A673 (cell line): ENCODE measurements at regions of chr7 and their contacts with region 1.

Region 1: DNA sequence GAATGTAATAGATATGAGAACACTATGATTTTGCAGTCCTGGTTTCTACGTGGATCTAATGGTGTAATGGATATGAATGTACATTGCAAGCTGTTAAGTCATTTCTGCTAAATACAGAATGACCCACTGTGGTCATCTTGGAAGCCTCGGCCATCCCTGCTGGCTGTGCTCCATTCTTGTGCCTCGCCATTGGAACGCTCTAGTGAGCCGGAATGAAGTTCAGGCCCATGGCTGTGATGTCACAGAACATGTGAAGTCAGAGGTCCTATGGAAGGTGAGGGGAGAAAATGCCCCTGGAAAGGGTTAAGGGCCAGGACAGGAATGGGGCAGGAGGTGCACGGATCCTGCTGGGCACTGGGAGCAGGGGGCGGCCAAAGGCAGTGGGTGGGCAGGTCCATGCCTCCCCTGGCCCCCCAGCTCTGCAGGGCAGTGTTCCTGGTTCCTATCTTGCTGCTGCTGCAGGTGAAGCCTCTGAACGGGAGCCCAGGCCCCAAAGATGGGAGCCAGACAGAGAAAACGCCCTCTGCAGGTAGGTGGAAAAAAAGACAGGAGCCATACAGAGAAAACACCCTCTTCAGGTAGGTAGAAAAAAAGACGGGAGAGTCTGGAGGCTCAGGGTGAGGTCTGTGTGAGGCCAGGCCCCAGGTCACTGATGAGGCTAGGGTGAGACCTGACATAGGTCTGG is at the start of gene LLCFC1:
- DNase-seq: no peak
- H3K4me3 ChIP-seq: no peak within 1 kb of the TSS
- H3K27ac ChIP-seq: no peak within 1 kb of the TSS
- H3K4me1 ChIP-seq: no peaks in the 10 kb centered on the region
- H3K27me3 ChIP-seq: no peaks in the 10 kb centered on the region
- CTCF ChIP-seq: peak; percentile 43
- total RNA-seq, gene LLCFC1: not detected in 2 replicates

Region 2: DNA sequence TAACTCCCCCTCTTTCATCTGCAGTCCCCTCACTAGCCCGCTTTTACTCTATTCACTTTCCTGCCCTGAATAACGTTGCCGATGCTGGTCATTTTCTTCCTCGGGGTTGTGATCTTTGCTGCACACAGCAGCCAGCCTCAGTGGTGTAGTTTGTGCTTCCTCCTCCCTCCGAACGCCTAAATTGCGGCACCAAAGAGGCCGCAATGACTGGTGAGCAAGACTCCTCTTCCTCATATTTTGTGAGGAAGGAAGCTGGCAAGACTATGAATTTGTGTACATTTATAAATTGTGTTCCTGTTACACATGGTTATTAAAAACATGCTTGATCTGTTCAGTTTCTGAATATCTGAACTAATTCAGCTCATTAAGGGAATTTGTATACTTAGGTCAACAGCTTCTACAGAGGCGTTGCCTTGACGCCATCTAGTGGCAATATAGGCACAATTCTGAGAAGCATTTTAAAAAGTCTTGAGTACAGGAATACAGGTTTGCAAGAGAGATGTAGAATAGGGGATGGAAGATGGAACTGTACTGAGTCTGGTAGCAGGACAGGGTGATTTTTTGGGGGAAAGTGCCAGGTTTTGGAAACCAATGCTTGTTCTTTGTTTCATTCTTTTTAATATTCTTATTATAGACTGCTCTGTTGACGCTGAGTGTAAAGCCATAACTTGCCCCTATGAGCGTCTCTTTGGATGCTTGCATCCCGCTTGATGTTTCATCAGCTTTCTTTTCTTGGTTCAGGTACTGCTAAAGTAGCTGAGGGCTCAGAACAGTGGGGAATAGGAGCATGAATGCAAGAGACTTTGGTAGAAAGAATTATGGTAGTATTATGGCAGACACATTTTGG is 1153.4 kb before region 1 on chr7:
- CTCF ChIA-PET with region 1: no interaction called
- POLR2A ChIA-PET with region 1: no interaction called
- intact Hi-C with region 1: loop called (anchors 10 kb)
- DNase-seq: peak; percentile 63
- H3K4me3 ChIP-seq: no peak overlapping the region
- H3K27ac ChIP-seq: no peak overlapping the region
- H3K4me1 ChIP-seq: no peaks in the 10 kb centered on the region
- H3K27me3 ChIP-seq: no peaks in the 10 kb centered on the region
- CTCF ChIP-seq: peak; percentile 86

Region 3: DNA sequence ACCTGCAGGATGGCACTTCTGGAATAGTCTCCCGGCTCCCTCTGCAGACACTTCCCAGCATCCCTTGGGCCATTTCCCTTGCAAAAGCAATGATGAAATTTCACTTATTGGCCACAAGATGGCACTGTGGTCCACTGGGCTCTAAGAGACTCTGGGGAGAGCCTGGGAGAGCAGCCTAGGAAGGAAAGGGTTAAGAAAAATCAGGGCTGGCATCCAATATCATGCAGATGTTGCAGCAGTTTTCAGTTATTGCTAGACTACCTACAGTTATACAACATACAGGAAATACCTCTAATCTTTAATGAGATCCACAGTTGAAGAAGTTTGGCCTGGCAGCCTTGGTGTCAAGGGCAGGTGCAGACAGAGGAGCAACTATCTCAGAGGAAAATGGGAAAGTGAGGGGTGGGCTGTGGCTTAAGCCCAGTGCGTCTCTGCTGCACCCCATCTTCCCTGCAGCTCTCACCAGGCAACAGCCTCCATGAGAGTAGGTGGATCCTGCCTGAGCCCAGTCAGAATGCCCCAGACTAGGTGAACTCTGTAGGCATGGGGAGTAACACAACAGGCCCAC is 581.3 kb before region 1 on chr7:
- CTCF ChIA-PET with region 1: no interaction called
- POLR2A ChIA-PET with region 1: no interaction called
- intact Hi-C with region 1: no loop called
- DNase-seq: peak; percentile 78
- H3K4me3 ChIP-seq: no peak overlapping the region
- H3K27ac ChIP-seq: no peak overlapping the region
- H3K4me1 ChIP-seq: no peaks in the 10 kb centered on the region
- H3K27me3 ChIP-seq: no peaks in the 10 kb centered on the region
- CTCF ChIP-seq: peak; percentile 88

Region 4: DNA sequence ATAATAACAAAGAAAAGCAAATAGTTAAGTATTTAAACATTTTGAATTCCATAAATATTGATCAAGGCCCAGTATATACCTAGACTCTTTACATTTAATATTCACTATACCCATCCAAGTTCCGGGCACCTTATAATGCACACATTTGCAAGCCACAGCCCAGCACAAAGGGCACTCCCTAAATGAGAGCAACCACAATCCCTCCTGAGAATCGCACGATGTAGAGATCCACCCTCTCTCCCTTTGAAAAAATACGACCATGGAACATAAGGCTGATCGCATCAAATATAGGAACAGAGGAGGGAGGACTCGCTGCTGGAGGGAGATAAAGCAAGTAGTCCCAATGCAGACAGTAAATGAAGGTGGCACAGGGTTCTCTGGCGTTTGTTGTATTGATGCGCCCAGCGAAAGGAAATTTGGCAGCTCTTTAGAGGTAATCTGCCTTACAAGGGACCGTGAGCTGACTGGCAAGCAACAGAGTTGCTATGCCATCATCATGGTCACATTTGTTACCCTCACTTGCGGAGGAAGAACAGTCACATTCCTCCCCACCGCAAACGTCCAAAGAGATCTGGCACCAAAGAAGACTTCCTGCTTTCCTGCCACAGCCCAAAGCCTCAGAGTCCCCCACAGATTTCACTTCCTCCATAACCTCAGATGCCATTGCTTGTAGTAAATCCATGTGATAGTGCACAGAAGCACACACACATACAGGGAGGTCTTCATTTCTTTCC is 266.4 kb after region 1 on chr7:
- CTCF ChIA-PET with region 1: interaction called, 11 read pairs
- POLR2A ChIA-PET with region 1: no interaction called
- intact Hi-C with region 1: no loop called
- DNase-seq: no peak
- H3K4me3 ChIP-seq: no peak overlapping the region
- H3K27ac ChIP-seq: no peak overlapping the region
- H3K4me1 ChIP-seq: no peaks in the 10 kb centered on the region
- H3K27me3 ChIP-seq: peaks cover 12% of the 10 kb centered on the region
- CTCF ChIP-seq: no peak